Gastrocnemius medialis (tissue), 4 donors: ENCODE measurements at regions of chr13 and their contacts with region 1.

Region 1: GRCh38 chr13:49356223-49356622 is 87.6 kb downstream of the CAB39L start:
- DNase-seq: no peak
- ATAC-seq: peak; percentile 92 to 97
- H3K4me3 ChIP-seq: no peak overlapping the region
- H3K27ac ChIP-seq: peak overlapping the region; percentile 57 to 59 (median 58)
- H3K4me1 ChIP-seq: peaks cover 0 to 11% of the 10 kb centered on the region in 2 donors
- H3K27me3 ChIP-seq: no peaks in the 10 kb centered on the region
- CTCF ChIP-seq: no peak
- POLR2A ChIP-seq: no peak

Region 2: DNA sequence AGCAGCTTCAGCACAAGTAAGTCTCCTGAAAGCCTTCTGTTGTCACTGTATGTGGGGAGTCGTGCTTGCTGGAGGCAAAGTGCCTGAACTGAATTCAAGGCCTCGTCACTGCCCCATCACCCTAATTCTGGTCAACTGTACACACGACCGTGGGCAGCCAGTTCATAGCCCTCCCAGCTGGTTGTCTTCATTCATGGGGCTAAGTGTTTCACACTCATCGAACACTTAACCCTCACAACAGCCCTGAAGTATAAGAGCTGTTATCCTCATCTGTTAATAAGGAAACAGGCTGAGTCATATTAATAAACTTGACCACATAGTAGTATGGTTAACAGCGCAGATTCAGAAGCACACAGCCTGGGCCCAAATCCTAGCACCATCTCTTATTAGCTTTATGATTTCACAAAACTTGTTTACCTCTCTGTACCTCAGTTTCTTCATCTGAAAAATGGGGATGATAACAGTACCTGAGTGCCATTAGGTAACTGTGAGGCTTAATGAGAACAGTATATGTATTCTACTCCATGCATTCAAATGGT is 41.8 kb before region 1 on chr13:
- in situ Hi-C with region 1: no loop called
- intact Hi-C with region 1: loop called (anchors 5 kb)
- DNase-seq: no peak
- ATAC-seq: peak in 1 of 2 donors; percentile 5
- H3K4me3 ChIP-seq: no peak overlapping the region
- H3K27ac ChIP-seq: peak overlapping the region; percentile 33 to 65 (median 48)
- H3K4me1 ChIP-seq: peaks cover under 1 to 3% of the 10 kb centered on the region in 2 donors
- H3K27me3 ChIP-seq: no peaks in the 10 kb centered on the region
- CTCF ChIP-seq: no peak
- POLR2A ChIP-seq: no peak

Region 3: GRCh38 chr13:49342454-49342853 is 13.8 kb before region 1 on chr13:
- in situ Hi-C with region 1: no loop called
- intact Hi-C with region 1: no loop called
- DNase-seq: no peak
- ATAC-seq: no peak
- H3K4me3 ChIP-seq: no peak overlapping the region
- H3K27ac ChIP-seq: no peak overlapping the region
- H3K4me1 ChIP-seq: no peaks in the 10 kb centered on the region
- H3K27me3 ChIP-seq: no peaks in the 10 kb centered on the region
- CTCF ChIP-seq: no peak
- POLR2A ChIP-seq: no peak

Region 4: DNA sequence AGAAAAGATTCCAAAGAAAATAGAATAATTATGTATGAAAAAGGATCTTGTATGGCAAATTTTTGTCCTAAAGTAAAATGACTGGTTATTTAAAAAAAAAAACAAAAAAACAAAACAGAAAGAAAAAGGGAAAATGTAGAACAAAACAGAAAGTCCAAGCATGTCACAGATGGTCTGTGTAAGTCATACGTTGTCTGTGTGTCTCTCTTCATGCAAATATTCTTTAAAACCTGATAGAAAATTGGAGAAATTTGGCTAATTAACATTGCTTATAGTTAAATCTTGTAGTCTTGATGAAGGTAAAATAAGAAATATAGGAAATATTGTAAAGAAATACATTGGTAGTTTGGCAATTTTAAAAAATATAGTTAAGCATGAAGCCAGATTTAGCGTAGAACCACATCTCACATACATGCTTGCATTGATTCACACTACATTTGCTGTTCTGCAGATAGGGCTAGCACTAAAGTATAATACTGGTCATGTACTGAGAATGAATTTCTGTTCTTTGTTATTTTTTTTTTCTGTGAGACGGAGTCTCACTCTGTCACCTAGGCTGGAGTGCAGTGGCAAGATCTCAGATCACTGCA is 521.5 kb after region 1 on chr13:
- in situ Hi-C with region 1: no loop called
- intact Hi-C with region 1: no loop called
- DNase-seq: no peak
- ATAC-seq: no peak
- H3K4me3 ChIP-seq: peak overlapping the region in 1 of 4 donors; percentile 3
- H3K27ac ChIP-seq: no peak overlapping the region
- H3K4me1 ChIP-seq: no peaks in the 10 kb centered on the region
- H3K27me3 ChIP-seq: no peaks in the 10 kb centered on the region
- CTCF ChIP-seq: no peak
- POLR2A ChIP-seq: no peak